HCT116 (cell line): ENCODE measurements at regions of chr11 and their contacts with region 1.

Region 1: GRCh38 chr11:130002846-130003716 is 446 bp upstream of the PRDM10 start:
- DNase-seq: peak; percentile 96
- ATAC-seq: peak; percentile 80
- H3K4me3 ChIP-seq: peak overlapping the region; percentile 70 to 80
- H3K27ac ChIP-seq: peak overlapping the region; percentile 97
- H3K4me1 ChIP-seq: peaks cover 0 to 32% of the 10 kb centered on the region in 2 experiments; a peak in 3 of 4 replicates
- H3K27me3 ChIP-seq: no peaks in the 10 kb centered on the region
- CTCF ChIP-seq: no peak
- POLR2A ChIP-seq: peak; percentile 60
- RAD21 ChIP-seq: no peak

Region 2: GRCh38 chr11:129992161-129992944 is 10.7 kb before region 1 on chr11:
- CTCF ChIA-PET with region 1: interaction called, 7 read pairs
- POLR2A ChIA-PET with region 1: interaction called, 22 read pairs
- RAD21 ChIA-PET with region 1: no interaction called
- intact Hi-C with region 1: no loop called
- DNase-seq: peak; percentile 48
- ATAC-seq: peak; percentile 96
- H3K4me3 ChIP-seq: no peak overlapping the region
- H3K27ac ChIP-seq: no peak overlapping the region
- H3K4me1 ChIP-seq: peaks cover 12 to 20% of the 10 kb centered on the region in 2 experiments; a peak in 3 of 4 replicates
- H3K27me3 ChIP-seq: no peaks in the 10 kb centered on the region
- CTCF ChIP-seq: peak; percentile 50 to 63 (median 56); a peak in 5 of 6 replicates
- POLR2A ChIP-seq: no peak
- RAD21 ChIP-seq: peak; percentile 68

Region 3: DNA sequence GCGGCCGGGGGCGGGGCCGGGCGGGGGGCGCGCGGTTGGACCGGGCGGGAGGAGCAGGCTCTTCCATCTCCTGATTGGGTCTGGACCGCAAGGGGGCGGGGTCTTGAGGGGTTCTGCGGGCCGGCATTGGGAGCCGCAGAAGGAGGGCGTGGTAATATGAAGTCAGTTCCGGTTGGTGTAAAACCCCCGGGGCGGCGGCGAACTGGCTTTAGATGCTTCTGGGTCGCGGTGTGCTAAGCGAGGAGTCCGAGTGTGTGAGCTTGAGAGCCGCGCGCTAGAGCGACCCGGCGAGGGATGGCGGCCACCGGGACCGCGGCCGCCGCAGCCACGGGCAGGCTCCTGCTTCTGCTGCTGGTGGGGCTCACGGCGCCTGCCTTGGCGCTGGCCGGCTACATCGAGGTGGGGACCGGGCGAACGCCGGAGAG is 66.6 kb after region 1 on chr11 and contains the start of gene APLP2:
- CTCF ChIA-PET with region 1: no interaction called
- POLR2A ChIA-PET with region 1: interaction called, 4 read pairs
- RAD21 ChIA-PET with region 1: no interaction called
- intact Hi-C with region 1: loop called (anchors 5 kb)
- DNase-seq: peak; percentile 94
- ATAC-seq: peak; percentile 93
- H3K4me3 ChIP-seq: peak within 1 kb of the TSS; percentile 71 to 79
- H3K27ac ChIP-seq: peak within 1 kb of the TSS; percentile 85
- H3K4me1 ChIP-seq: peaks cover 13 to 29% of the 10 kb centered on the region in 2 experiments; a peak in 3 of 4 replicates
- H3K27me3 ChIP-seq: no peaks in the 10 kb centered on the region
- CTCF ChIP-seq: no peak
- POLR2A ChIP-seq: peak; percentile 88
- RAD21 ChIP-seq: no peak
- total RNA-seq, gene APLP2: 210 TPM

Region 4: DNA sequence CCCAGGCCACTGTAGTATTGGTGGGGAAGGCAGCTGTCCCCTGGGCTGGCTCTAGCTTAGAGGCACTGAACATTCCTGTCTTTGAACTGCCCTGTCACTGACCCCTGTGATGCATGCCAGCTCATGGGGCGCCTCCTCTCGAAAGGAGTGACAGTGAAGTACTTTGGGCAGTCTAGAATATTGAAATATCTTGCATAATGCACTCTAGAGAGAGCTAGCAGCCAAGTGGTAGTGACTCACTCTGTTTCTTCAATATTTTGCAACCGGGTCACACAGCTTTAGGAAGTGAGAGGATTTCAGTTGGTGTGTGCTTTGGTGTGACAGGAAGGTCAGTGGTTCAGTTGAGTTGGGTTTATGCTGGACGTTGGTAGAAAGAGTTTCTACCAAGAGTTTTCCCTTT is 121.0 kb after region 1 on chr11:
- CTCF ChIA-PET with region 1: no interaction called
- POLR2A ChIA-PET with region 1: interaction called, 5 read pairs
- RAD21 ChIA-PET with region 1: no interaction called
- intact Hi-C with region 1: loop called (anchors 5 kb)
- DNase-seq: peak; percentile 61
- ATAC-seq: peak; percentile 82
- H3K4me3 ChIP-seq: no peak overlapping the region; a peak in 1 of 4 replicates
- H3K27ac ChIP-seq: no peak overlapping the region; the same call in 1 of the 2 replicates
- H3K4me1 ChIP-seq: peaks cover 10 to 48% of the 10 kb centered on the region in 2 experiments
- H3K27me3 ChIP-seq: no peaks in the 10 kb centered on the region
- CTCF ChIP-seq: no peak
- POLR2A ChIP-seq: no peak
- RAD21 ChIP-seq: peak; percentile 45